OCI-LY7 (cell line): ENCODE measurements at regions of chr3 and their contacts with region 1.

Region 1: GRCh38 chr3:50550079-50550741 is 17.3 kb downstream of the C3orf18 start:
- DNase-seq: peak; percentile 59
- H3K4me3 ChIP-seq: no peak overlapping the region
- H3K27ac ChIP-seq: no peak overlapping the region
- H3K4me1 ChIP-seq: no peaks in the 10 kb centered on the region
- CTCF ChIP-seq: peak; percentile 76

Region 2: DNA sequence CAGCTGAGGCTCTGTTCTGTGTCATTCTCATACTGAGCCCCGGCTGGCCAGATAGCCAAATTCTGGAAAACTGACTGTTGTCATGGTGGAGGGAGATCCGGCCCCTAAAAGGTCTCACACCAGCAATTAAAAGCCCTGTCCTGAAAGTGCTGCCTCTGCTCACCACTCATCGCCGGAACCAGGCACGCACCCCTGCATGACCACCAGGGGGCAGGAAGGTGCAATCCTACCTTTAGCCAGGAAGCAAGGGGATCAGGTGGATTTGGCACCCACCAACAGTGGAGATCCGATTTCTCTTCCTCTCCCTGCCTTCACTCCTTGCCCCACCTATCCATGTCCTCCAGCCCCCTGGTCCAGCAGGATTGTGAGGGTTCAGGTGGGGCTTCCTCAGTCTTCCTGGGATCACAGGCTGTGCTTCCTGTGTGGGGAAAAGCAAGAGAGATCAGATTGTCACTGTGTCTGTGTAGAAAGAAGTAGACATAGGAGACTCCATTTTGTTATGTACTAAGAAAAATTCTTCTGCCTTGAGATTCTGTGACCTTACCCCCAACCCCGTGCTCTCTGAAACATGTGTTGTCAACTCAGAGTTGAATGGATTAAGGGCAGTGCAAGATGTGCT is 30.6 kb before region 1 on chr3:
- CTCF ChIA-PET with region 1: no interaction called
- POLR2A ChIA-PET with region 1: no interaction called
- intact Hi-C with region 1: loop called (anchors 2 kb)
- DNase-seq: peak; percentile 70
- H3K4me3 ChIP-seq: no peak overlapping the region
- H3K27ac ChIP-seq: no peak overlapping the region
- H3K4me1 ChIP-seq: peaks cover 6% of the 10 kb centered on the region
- CTCF ChIP-seq: peak; percentile 91